Activated CD4-positive, alpha-beta T cell treated with anti-CD3 and anti-CD28 coated beads for 36 hours (primary cell): ENCODE measurements at regions of chr6 and their contacts with region 1.

Region 1: DNA sequence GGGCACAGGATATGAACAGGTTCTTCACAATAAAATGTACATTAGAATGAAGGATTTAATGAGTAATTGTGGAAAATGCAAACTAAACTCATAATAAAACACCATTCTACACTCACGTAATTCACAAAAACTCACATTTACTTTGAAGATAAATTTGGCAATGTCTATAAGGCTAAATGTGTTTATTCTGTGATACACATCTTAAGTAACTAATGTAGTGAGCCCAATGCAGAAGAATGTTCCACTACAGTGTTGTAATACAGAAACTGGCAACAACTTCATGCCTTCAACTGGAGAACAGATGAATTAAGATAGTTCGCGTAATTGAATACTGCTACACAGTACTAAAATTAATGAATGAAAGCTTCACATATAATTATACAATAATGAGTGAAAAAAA is 128.6 kb upstream of the EYS start:
- DNase-seq: no peak
- ATAC-seq: no peak
- H3K4me3 Mint-ChIP-seq: no peak overlapping the region
- H3K27ac Mint-ChIP-seq: no peak overlapping the region
- H3K4me1 Mint-ChIP-seq: no peaks in the 10 kb centered on the region
- H3K27me3 Mint-ChIP-seq: no peaks in the 10 kb centered on the region

Region 2: DNA sequence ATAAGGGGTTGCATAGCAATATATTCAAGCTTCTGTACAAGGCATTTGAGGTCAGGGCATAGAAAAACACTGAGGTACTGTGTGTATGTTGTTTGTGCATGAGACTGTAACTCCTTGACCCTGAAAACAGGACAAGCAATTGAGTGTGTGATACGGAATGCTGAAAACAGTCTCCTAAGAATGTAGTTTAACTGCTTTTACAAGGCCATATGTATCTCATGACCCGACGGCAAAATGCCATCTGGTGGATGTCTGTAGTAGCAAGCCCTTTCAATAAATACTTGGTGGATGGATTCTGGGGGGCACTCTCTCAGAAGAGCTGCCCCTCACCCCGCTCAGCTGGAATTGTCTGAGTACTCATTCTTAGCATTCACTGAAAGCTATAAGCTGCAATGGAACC is 59.3 kb before region 1 on chr6:
- CTCF ChIA-PET with region 1: no interaction called
- POLR2A ChIA-PET with region 1: no interaction called
- intact Hi-C with region 1: no loop called
- DNase-seq: no peak
- ATAC-seq: no peak
- H3K4me3 Mint-ChIP-seq: no peak overlapping the region
- H3K27ac Mint-ChIP-seq: no peak overlapping the region
- H3K4me1 Mint-ChIP-seq: no peaks in the 10 kb centered on the region
- H3K27me3 Mint-ChIP-seq: no peaks in the 10 kb centered on the region

Region 3: GRCh38 chr6:65816991-65817390 is 18.7 kb before region 1 on chr6:
- CTCF ChIA-PET with region 1: no interaction called
- POLR2A ChIA-PET with region 1: no interaction called
- intact Hi-C with region 1: no loop called
- DNase-seq: no peak
- ATAC-seq: no peak
- H3K4me3 Mint-ChIP-seq: no peak overlapping the region
- H3K27ac Mint-ChIP-seq: no peak overlapping the region
- H3K4me1 Mint-ChIP-seq: no peaks in the 10 kb centered on the region
- H3K27me3 Mint-ChIP-seq: no peaks in the 10 kb centered on the region

Region 4: GRCh38 chr6:65851785-65852184 is 16.1 kb after region 1 on chr6:
- CTCF ChIA-PET with region 1: no interaction called
- POLR2A ChIA-PET with region 1: no interaction called
- intact Hi-C with region 1: no loop called
- DNase-seq: no peak
- ATAC-seq: no peak
- H3K4me3 Mint-ChIP-seq: no peak overlapping the region
- H3K27ac Mint-ChIP-seq: no peak overlapping the region
- H3K4me1 Mint-ChIP-seq: no peaks in the 10 kb centered on the region
- H3K27me3 Mint-ChIP-seq: no peaks in the 10 kb centered on the region

Region 5: GRCh38 chr6:65876668-65877067 is 41.0 kb after region 1 on chr6:
- CTCF ChIA-PET with region 1: no interaction called
- POLR2A ChIA-PET with region 1: no interaction called
- intact Hi-C with region 1: loop called in 1 of 2 experiments (anchors 1 kb)
- DNase-seq: no peak
- ATAC-seq: no peak
- H3K4me3 Mint-ChIP-seq: no peak overlapping the region
- H3K27ac Mint-ChIP-seq: no peak overlapping the region
- H3K4me1 Mint-ChIP-seq: no peaks in the 10 kb centered on the region
- H3K27me3 Mint-ChIP-seq: no peaks in the 10 kb centered on the region

Region 6: GRCh38 chr6:65896140-65896539 is 60.5 kb after region 1 on chr6:
- CTCF ChIA-PET with region 1: no interaction called
- POLR2A ChIA-PET with region 1: no interaction called
- intact Hi-C with region 1: no loop called
- DNase-seq: no peak
- ATAC-seq: no peak
- H3K4me3 Mint-ChIP-seq: no peak overlapping the region
- H3K27ac Mint-ChIP-seq: no peak overlapping the region
- H3K4me1 Mint-ChIP-seq: no peaks in the 10 kb centered on the region
- H3K27me3 Mint-ChIP-seq: no peaks in the 10 kb centered on the region